ENCODE measurements at regions of chr14 and their contacts with region 1.

Region 1: GRCh38 chr14:94689218-94689984 is 77.2 kb downstream of the SERPINA3 start:
- DNase-seq: peak; percentile 23
- H3K4me3 Mint-ChIP-seq: no peak overlapping the region
- H3K27ac Mint-ChIP-seq: no peak overlapping the region
- H3K4me1 Mint-ChIP-seq: peaks cover 2% of the 10 kb centered on the region
- H3K27me3 Mint-ChIP-seq: peaks cover 7% of the 10 kb centered on the region

Region 2: GRCh38 chr14:94665121-94665520 is 24.3 kb before region 1 on chr14:
- intact Hi-C with region 1: no loop called
- DNase-seq: no peak
- H3K4me3 Mint-ChIP-seq: no peak overlapping the region
- H3K27ac Mint-ChIP-seq: no peak overlapping the region
- H3K4me1 Mint-ChIP-seq: no peaks in the 10 kb centered on the region
- H3K27me3 Mint-ChIP-seq: peaks cover 9% of the 10 kb centered on the region

Region 3: GRCh38 chr14:94795372-94795771 is 106.0 kb after region 1 on chr14:
- intact Hi-C with region 1: no loop called
- DNase-seq: no peak
- H3K4me3 Mint-ChIP-seq: no peak overlapping the region
- H3K27ac Mint-ChIP-seq: no peak overlapping the region
- H3K4me1 Mint-ChIP-seq: no peaks in the 10 kb centered on the region
- H3K27me3 Mint-ChIP-seq: no peaks in the 10 kb centered on the region

Region 4: DNA sequence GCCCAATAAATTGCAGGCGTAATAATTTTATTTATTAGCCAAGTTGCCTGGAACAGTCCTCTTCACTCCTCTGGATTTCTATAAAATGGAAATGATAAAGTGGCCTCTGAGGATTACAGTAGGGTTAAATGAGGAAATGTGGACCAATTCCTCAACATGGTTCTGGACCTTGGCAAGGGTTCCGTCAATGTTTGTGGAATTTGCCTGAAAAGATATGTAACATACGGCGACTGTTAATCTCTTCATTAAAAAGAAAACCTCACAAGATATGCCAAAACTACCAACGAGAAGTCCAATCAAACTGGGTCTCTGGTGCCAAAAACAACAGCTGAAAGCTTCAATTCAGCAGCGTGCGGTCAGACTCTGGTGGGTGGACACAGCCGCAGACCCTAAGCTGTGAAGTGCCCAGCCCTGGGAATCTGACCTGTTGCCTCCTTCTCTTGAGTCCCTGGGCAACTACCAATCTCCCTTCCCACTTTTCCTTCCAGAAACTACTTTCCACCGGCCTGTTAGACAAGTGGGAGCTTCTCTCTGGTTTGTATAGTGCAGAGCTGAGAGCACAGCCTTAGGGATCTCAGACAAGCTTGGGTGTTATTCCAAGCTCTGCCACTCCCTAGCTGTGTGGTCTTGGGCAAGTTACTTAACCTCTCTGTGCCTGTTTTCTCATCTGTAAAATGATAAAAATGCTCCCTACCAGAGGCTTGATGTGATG is 271.0 kb after region 1 on chr14:
- intact Hi-C with region 1: no loop called
- DNase-seq: no peak
- H3K4me3 Mint-ChIP-seq: no peak overlapping the region
- H3K27ac Mint-ChIP-seq: no peak overlapping the region
- H3K4me1 Mint-ChIP-seq: no peaks in the 10 kb centered on the region
- H3K27me3 Mint-ChIP-seq: no peaks in the 10 kb centered on the region

Region 5: GRCh38 chr14:95098984-95099599 is 409.7 kb after region 1 on chr14:
- intact Hi-C with region 1: loop called (anchors 10 kb)
- DNase-seq: no peak
- H3K4me3 Mint-ChIP-seq: no peak overlapping the region
- H3K27ac Mint-ChIP-seq: no peak overlapping the region
- H3K4me1 Mint-ChIP-seq: peaks cover 7% of the 10 kb centered on the region
- H3K27me3 Mint-ChIP-seq: no peaks in the 10 kb centered on the region

Region 6: GRCh38 chr14:95361373-95362137 is 672.2 kb after region 1 on chr14:
- intact Hi-C with region 1: loop called (anchors 5 kb)
- DNase-seq: no peak
- H3K4me3 Mint-ChIP-seq: no peak overlapping the region
- H3K27ac Mint-ChIP-seq: no peak overlapping the region
- H3K4me1 Mint-ChIP-seq: peaks cover 2% of the 10 kb centered on the region
- H3K27me3 Mint-ChIP-seq: peaks cover 47% of the 10 kb centered on the region